Adrenal gland (tissue), 19 donors: ENCODE measurements at regions of chr10 and their contacts with region 1.

Region 1: GRCh38 chr10:12129222-12130111 is at the start of gene SEC61A2:
- DNase-seq: peak; percentile 94 to 99 (median 96)
- H3K4me3 ChIP-seq: peak within 1 kb of the TSS; percentile 2 to 97 (median 84)
- H3K27ac ChIP-seq: peak within 1 kb of the TSS; percentile 70 to 97 (median 93)
- H3K4me1 ChIP-seq: peaks cover 0 to 10% of the 10 kb centered on the region in 2 donors
- H3K27me3 ChIP-seq: no peaks in the 10 kb centered on the region
- CTCF ChIP-seq: no peak
- POLR2A ChIP-seq: peak; percentile 41 to 77
- total RNA-seq, gene SEC61A2: 1.3 to 6.0 (median 5.1) TPM

Region 2: GRCh38 chr10:11175823-11176243 is 953.6 kb before region 1 on chr10:
- intact Hi-C with region 1: no loop called
- DNase-seq: peak in 4 of 7 donors; percentile 25 to 40 (median 32)
- H3K4me3 ChIP-seq: no peak overlapping the region
- H3K27ac ChIP-seq: peak overlapping the region in 3 of 5 donors; percentile 58 to 84 (median 68)
- H3K4me1 ChIP-seq: no peaks in the 10 kb centered on the region
- H3K27me3 ChIP-seq: no peaks in the 10 kb centered on the region
- CTCF ChIP-seq: no peak
- POLR2A ChIP-seq: no peak

Region 3: GRCh38 chr10:11898372-11899066 is 230.9 kb before region 1 on chr10:
- intact Hi-C with region 1: no loop called
- DNase-seq: no peak
- H3K4me3 ChIP-seq: no peak overlapping the region
- H3K27ac ChIP-seq: no peak overlapping the region
- H3K4me1 ChIP-seq: no peaks in the 10 kb centered on the region
- H3K27me3 ChIP-seq: no peaks in the 10 kb centered on the region
- CTCF ChIP-seq: no peak
- POLR2A ChIP-seq: no peak

Region 4: DNA sequence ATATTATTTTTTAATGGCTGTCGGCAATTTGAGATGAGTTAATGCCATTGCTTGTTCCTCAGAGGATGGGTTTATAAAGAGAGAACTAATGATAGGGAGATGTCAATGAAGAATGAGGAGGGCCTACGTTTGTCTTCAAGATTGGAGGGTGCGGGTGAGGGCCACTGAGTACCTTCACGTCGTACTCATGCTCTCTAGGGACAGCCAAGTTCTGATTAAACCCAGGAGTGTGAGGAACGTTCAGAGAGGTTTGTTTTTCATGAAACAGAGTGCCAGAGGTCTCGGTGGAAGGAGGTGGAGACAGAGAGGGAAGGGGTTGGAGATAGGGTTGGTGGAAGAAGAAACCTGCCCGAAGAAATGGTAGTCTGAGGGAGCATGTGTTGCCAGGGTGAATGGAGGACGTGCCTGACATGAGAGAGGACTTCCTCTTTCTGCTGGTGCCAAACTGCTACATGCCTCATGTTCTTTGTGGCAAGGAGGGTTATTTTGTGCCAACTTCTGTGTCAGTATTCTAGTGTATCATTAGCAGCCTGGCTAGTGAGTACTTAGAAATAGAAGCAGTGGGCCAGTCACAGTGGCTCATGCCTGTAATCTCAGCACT is 51.8 kb before region 1 on chr10:
- intact Hi-C with region 1: loop called in 1 of 2 experiments (anchors 10 kb)
- DNase-seq: no peak
- H3K4me3 ChIP-seq: no peak overlapping the region
- H3K27ac ChIP-seq: no peak overlapping the region
- H3K4me1 ChIP-seq: no peaks in the 10 kb centered on the region
- H3K27me3 ChIP-seq: no peaks in the 10 kb centered on the region
- CTCF ChIP-seq: no peak
- POLR2A ChIP-seq: no peak